Activated naive CD4-positive, alpha-beta T cell treated with anti-CD3 and anti-CD28 coated beads for 36 hours (primary cell): ENCODE measurements at regions of chr18 and their contacts with region 1.

Region 1: GRCh38 chr18:59823596-59824195 is 76.1 kb upstream of the PMAIP1 start:
- DNase-seq: peak; percentile 78
- H3K4me3 Mint-ChIP-seq: no peak overlapping the region
- H3K27ac Mint-ChIP-seq: no peak overlapping the region
- H3K4me1 Mint-ChIP-seq: no peaks in the 10 kb centered on the region
- H3K27me3 Mint-ChIP-seq: peaks cover 2% of the 10 kb centered on the region

Region 2: GRCh38 chr18:59308248-59308937 is 515.3 kb before region 1 on chr18:
- CTCF ChIA-PET with region 1: interaction called, 4 read pairs
- intact Hi-C with region 1: loop called (anchors 1 kb)
- DNase-seq: peak; percentile 67
- H3K4me3 Mint-ChIP-seq: peak overlapping the region; percentile 48
- H3K27ac Mint-ChIP-seq: no peak overlapping the region
- H3K4me1 Mint-ChIP-seq: no peaks in the 10 kb centered on the region
- H3K27me3 Mint-ChIP-seq: peaks cover 29% of the 10 kb centered on the region

Region 3: DNA sequence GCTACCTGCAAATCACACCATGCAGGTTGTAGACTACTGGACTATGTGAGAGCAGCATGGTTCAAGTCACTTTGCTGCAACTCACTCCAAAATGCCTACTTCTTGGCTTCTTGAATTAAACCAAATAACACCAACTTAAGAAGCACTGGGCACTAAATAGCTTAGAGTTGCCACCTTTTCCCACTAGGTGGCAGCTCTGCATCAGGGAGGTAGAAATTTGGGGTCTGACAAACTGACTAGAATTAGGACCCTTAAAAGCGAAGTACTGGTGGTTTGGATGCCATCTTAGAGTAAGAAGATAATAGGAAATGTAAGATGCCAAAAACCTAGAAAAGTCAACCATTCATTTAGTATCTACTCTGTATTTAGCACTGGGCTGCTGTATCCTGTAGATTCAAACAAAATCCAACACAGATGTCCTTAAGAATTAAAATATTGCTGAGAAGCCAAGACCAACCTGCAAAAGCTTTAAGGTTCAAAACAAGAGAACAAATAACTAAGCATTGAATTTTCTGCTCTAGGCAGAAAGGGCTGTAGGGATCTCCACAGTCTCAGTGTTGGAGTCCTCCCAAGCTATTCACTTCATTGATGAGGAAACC is 192.0 kb before region 1 on chr18:
- CTCF ChIA-PET with region 1: interaction called, 5 read pairs
- intact Hi-C with region 1: loop called (anchors 1 kb)
- DNase-seq: no peak
- H3K4me3 Mint-ChIP-seq: no peak overlapping the region
- H3K27ac Mint-ChIP-seq: no peak overlapping the region
- H3K4me1 Mint-ChIP-seq: no peaks in the 10 kb centered on the region
- H3K27me3 Mint-ChIP-seq: no peaks in the 10 kb centered on the region

Region 4: GRCh38 chr18:59697236-59697932 is 126.3 kb before region 1 on chr18 and contains the start of gene CCBE1:
- CTCF ChIA-PET with region 1: interaction called, 6 read pairs
- intact Hi-C with region 1: loop called (anchors 1 kb)
- DNase-seq: peak; percentile 52
- H3K4me3 Mint-ChIP-seq: peak within 1 kb of the TSS; percentile 4
- H3K27ac Mint-ChIP-seq: no peak within 1 kb of the TSS
- H3K4me1 Mint-ChIP-seq: peaks cover 13% of the 10 kb centered on the region
- H3K27me3 Mint-ChIP-seq: peaks cover 52% of the 10 kb centered on the region
- total RNA-seq, gene CCBE1: not detected

Region 5: GRCh38 chr18:59783138-59783537 is 40.6 kb before region 1 on chr18:
- CTCF ChIA-PET with region 1: interaction called, 3 read pairs
- intact Hi-C with region 1: loop called (anchors 1 kb)
- DNase-seq: peak; percentile 45
- H3K4me3 Mint-ChIP-seq: no peak overlapping the region
- H3K27ac Mint-ChIP-seq: no peak overlapping the region
- H3K4me1 Mint-ChIP-seq: no peaks in the 10 kb centered on the region
- H3K27me3 Mint-ChIP-seq: peaks cover 5% of the 10 kb centered on the region

Region 6: DNA sequence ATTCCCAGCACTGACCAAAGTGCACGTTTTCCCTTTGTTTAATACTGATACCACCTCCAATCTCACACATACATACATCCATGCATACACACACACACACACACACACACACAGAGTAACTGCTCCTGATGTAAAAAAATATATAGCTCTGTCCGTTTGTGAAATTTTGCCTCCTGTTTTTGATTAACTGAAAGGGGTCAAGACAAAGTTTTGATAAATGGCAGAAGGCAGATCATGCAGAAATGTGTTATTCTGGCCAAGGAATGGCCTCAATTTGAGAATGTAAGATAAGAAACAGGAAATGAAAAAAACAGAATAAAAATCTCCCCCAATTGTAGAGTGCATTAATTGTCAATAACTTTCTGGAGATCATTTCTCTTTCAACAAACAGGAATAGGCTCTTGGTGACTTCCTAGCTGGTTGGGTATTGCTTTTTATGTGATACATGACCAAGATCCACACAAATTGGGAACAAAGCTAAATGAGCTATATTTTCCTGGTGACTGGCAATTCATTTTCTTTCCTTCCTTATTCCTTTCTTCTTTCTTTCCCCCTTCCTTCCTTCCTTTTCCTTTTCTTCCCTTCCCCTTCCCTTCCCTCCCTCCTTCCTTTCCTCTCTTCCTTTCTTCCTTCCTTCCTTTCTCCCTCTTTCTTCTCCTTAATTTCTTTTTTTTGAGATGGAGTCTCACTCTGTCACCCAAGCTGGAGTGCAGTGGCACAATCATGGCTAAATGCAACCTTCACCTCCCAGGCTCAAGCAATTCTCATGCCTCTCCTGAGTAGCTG is 12.8 kb before region 1 on chr18:
- CTCF ChIA-PET with region 1: interaction called, 11 read pairs
- intact Hi-C with region 1: no loop called
- DNase-seq: no peak
- H3K4me3 Mint-ChIP-seq: no peak overlapping the region
- H3K27ac Mint-ChIP-seq: no peak overlapping the region
- H3K4me1 Mint-ChIP-seq: no peaks in the 10 kb centered on the region
- H3K27me3 Mint-ChIP-seq: peaks cover 14% of the 10 kb centered on the region